ENCODE measurements at regions of chr6 and their contacts with region 1.

Region 1: DNA sequence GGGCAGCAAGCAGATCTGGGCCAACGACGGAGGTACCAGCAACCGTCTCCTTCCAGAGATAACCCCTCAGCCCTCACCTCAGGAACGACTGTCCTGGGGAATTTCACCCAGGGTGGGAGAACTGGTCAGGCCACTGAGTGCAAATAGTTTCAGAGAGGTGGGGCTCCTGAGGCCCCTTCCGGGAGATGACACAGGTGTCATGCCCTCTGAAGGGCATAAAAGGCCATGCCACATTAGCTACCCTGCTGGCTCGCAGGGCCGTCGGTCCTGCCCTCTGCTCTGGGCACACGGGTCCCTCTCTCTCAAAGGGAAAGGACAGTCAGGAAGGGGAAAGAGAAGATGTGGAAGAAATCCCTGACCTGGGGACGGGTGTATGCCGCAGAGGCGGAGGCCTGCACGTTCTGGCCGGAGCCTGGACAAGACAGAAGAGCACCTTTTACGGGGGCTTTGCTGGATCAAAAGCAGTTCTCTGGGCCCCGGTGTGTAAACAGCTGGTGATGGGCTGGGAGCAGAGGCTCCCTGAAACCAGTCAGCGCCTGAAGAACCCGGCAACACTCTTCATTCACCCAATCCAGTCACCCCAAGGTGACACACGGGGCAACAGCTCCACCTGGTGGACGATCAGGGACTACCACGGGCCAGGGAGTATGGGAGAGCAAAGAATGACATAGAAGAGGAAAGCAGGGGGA is 6.4 kb upstream of the TAF8 start:
- DNase-seq: peak; percentile 98
- H3K4me3 Mint-ChIP-seq: peak overlapping the region; percentile 75
- H3K27ac Mint-ChIP-seq: peak overlapping the region; percentile 97
- H3K4me1 Mint-ChIP-seq: peaks cover 81% of the 10 kb centered on the region
- H3K27me3 Mint-ChIP-seq: no peaks in the 10 kb centered on the region

Region 2: GRCh38 chr6:41779793-41780545 is 264.0 kb before region 1 on chr6 and contains the start of gene FRS3:
- CTCF ChIA-PET with region 1: interaction called, 143 read pairs
- intact Hi-C with region 1: loop called (anchors 1 kb)
- DNase-seq: peak; percentile 99
- H3K4me3 Mint-ChIP-seq: peak within 1 kb of the TSS; percentile 82
- H3K27ac Mint-ChIP-seq: no peak within 1 kb of the TSS
- H3K4me1 Mint-ChIP-seq: peaks cover 11% of the 10 kb centered on the region
- H3K27me3 Mint-ChIP-seq: peaks cover 4% of the 10 kb centered on the region
- total RNA-seq, gene FRS3: 4.0 to 4.2 TPM

Region 3: GRCh38 chr6:41901882-41902519 is 141.9 kb before region 1 on chr6:
- CTCF ChIA-PET with region 1: interaction called, 32 read pairs
- intact Hi-C with region 1: loop called (anchors 1 kb)
- DNase-seq: peak; percentile 82
- H3K4me3 Mint-ChIP-seq: no peak overlapping the region
- H3K27ac Mint-ChIP-seq: no peak overlapping the region
- H3K4me1 Mint-ChIP-seq: peaks cover 16% of the 10 kb centered on the region
- H3K27me3 Mint-ChIP-seq: no peaks in the 10 kb centered on the region

Region 4: GRCh38 chr6:41964201-41964887 is 79.6 kb before region 1 on chr6:
- CTCF ChIA-PET with region 1: interaction called, 35 read pairs
- intact Hi-C with region 1: no loop called
- DNase-seq: peak; percentile 69
- H3K4me3 Mint-ChIP-seq: no peak overlapping the region
- H3K27ac Mint-ChIP-seq: peak overlapping the region; percentile 98
- H3K4me1 Mint-ChIP-seq: peaks cover 92% of the 10 kb centered on the region
- H3K27me3 Mint-ChIP-seq: no peaks in the 10 kb centered on the region

Region 5: DNA sequence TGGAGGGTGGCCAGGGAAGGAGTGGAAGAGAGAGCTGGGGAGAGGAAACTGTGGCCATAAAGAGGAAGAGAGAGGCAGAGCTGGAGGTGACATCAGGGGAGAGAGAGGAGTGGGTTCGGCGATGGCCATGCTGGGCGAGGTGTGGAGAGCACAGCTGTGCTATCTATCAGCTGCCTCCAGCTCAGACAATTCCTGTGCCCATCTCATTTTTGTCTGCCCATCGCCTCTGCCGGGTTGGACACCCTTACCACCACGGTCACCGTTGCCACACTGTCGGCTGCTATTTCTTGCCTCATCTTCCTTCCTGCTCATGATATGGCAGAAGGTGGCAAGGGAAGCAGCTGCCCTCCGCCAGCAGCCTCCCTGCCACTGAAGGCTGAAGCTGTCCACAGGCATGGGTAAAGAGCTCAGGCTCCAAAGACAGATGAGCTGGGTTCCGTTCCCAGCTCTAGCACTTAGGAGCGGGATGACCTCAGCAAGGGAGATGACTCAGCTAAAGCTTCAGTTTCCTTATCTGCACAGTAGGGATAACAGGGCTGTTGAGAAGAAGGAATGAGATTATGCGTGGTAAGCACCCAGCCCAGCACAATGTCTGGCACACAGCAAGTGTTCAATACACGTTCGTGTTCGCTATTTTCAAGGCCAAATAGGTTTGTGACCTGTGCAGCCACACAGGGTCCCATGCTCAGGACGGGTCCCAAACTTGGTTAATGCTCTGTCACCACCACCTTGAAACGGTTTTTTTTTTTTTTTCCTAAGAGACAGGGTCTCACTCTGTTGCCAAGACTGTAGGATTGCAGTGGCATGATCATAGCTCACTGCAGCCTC is 15.5 kb before region 1 on chr6:
- CTCF ChIA-PET with region 1: interaction called, 17 read pairs
- intact Hi-C with region 1: loop called (anchors 1 kb)
- DNase-seq: peak; percentile 70
- H3K4me3 Mint-ChIP-seq: peak overlapping the region; percentile 68
- H3K27ac Mint-ChIP-seq: peak overlapping the region; percentile 99
- H3K4me1 Mint-ChIP-seq: peaks cover 94% of the 10 kb centered on the region
- H3K27me3 Mint-ChIP-seq: no peaks in the 10 kb centered on the region

Region 6: GRCh38 chr6:42368181-42368580 is 324.2 kb after region 1 on chr6:
- CTCF ChIA-PET with region 1: no interaction called
- intact Hi-C with region 1: no loop called
- DNase-seq: peak; percentile 79
- H3K4me3 Mint-ChIP-seq: peak overlapping the region; percentile 52
- H3K27ac Mint-ChIP-seq: peak overlapping the region; percentile 84
- H3K4me1 Mint-ChIP-seq: peaks cover 57% of the 10 kb centered on the region
- H3K27me3 Mint-ChIP-seq: no peaks in the 10 kb centered on the region

Measured in activated naive CD4-positive, alpha-beta T cell treated with anti-CD3 and anti-CD28 coated beads for 36 hours (primary cell).